ENCODE measurements at regions of chr12 and their contacts with region 1.

Region 1: DNA sequence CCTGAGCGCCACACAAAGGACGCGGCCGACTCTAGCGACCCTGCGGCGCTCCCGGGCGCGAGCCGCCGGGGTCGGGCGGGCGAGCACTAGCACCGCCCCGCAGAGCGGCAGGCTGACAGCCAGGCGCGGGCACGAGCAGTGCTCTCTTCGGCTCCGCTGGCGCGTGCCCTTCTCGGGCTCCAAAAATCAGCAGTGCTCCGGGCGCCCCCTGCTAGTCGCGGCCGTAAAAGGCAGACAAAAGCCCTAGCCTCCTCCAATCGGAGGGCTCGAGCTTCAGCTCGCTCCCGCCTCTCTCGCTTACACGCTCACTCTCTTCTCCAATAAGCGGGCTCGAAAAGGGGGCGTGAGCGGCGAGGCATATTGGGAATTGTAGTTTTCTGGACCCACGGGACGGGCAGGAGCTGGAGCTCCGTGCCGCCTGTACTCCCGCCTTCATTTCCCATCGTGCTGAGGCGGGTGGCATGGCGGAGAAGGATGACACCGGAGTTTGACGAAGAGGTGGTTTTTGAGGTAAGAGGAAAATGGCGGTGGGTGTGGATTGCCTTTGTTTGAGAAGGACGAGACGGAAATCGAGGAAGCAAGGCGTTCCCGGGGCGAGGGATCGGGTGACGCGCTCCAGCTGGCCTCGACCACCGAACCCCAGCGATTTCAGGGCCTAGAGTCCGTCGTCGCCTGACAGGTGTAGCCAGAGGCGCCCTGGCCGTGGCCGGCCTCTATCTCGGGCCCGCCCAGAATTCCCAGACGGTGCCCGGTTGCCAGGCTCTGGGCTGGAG is at the starts of genes FGD6 and VEZT:
- DNase-seq: peak; percentile 99
- H3K4me3 Mint-ChIP-seq: peak within 1 kb of the TSS; percentile 98
- H3K27ac Mint-ChIP-seq: peak within 1 kb of the TSS; percentile 97
- H3K4me1 Mint-ChIP-seq: peaks cover 30% of the 10 kb centered on the region
- H3K27me3 Mint-ChIP-seq: no peaks in the 10 kb centered on the region
- total RNA-seq, gene FGD6: 2.0 TPM
- total RNA-seq, gene VEZT: 41.3 to 42.5 TPM

Region 2: DNA sequence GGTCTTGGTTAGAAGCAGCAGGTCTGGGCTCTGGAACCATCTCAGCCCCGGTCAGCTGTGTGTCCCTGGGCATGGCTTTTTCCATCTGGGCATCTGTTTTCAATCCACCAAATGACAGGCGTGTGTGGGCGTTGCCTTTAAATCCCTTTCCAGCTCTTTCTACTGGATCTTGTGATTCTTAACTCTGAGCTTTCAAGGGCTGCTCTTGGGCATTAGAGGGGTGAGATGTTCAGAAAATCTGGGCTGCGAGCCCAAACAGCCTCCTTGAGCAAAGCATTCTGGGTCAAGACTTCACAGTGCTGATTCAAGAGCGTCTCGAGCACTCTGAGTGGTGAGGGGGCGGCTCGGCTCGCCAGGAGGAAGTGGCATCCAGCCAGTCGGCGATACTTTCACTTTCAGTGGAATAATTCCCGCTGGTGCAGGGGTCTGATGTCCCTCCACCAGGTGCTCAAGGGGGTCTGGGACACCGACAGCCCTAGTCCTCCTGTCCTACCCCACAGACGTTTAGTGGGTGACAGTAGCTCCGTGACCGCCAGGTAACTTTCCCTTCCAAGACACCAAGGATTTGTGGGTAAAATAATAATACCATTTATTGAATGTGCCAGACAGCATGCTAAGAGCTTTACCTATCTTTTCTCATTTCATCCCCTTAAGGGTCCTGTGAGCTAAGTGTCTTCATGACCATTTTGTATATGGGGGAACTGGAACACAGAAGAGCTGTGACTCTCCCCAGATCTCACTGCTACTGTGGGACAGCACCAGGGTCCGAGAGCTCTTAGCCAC is 955.1 kb before region 1 on chr12:
- CTCF ChIA-PET with region 1: no interaction called
- intact Hi-C with region 1: loop called (anchors 5 kb)
- DNase-seq: peak; percentile 83
- H3K4me3 Mint-ChIP-seq: peak overlapping the region; percentile 89
- H3K27ac Mint-ChIP-seq: peak overlapping the region; percentile 96
- H3K4me1 Mint-ChIP-seq: peaks cover 31% of the 10 kb centered on the region
- H3K27me3 Mint-ChIP-seq: no peaks in the 10 kb centered on the region

Region 3: GRCh38 chr12:95022477-95022876 is 195.1 kb before region 1 on chr12:
- CTCF ChIA-PET with region 1: no interaction called
- intact Hi-C with region 1: no loop called
- DNase-seq: no peak
- H3K4me3 Mint-ChIP-seq: no peak overlapping the region
- H3K27ac Mint-ChIP-seq: no peak overlapping the region
- H3K4me1 Mint-ChIP-seq: no peaks in the 10 kb centered on the region
- H3K27me3 Mint-ChIP-seq: no peaks in the 10 kb centered on the region

Region 4: DNA sequence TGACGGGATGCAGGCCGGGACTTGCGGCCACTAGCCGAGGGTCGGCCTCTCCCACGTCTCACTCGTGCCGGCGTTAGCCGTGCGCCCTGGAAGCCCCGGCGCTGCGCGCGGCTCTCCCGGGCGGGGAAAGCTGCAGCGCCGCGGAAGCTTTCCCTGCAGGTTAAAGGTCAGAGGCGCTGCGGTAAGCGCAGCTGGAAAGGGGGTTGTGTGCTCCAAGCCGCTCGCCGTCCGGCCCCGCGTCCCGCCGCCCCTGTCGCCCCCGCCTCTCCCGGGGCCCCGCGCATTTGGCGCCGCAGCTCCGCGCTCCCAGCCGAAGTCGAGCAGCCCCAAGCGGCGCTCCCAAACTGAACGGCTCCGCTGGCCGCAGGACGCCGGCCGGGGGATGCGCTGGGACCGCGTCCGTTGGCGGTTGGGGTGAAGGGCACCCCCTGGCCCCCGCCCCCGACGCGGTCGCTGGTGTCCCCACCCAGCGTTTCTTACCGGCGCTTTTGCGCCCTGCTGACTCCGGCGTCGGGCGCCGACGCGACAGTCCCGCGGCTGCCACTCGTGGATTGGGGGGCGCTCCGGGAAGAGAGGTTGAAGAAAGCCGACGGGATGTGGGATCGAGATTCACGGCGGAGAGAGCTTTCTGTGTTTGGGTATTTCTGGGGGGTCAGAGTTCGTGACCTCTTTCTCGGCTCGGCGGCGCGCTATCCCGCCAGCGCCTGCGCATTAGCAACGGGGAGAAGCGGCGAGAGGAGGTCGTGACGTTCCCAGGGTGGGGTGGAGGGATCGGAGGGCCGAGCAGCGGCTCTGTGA is 144.5 kb before region 1 on chr12 and contains the start of gene NR2C1:
- CTCF ChIA-PET with region 1: no interaction called
- intact Hi-C with region 1: loop called (anchors 1 kb)
- DNase-seq: peak; percentile 95
- H3K4me3 Mint-ChIP-seq: peak within 1 kb of the TSS; percentile 92
- H3K27ac Mint-ChIP-seq: peak within 1 kb of the TSS; percentile 63
- H3K4me1 Mint-ChIP-seq: peaks cover 19% of the 10 kb centered on the region
- H3K27me3 Mint-ChIP-seq: no peaks in the 10 kb centered on the region
- total RNA-seq, gene NR2C1: 19.8 to 24.6 TPM

Region 5: DNA sequence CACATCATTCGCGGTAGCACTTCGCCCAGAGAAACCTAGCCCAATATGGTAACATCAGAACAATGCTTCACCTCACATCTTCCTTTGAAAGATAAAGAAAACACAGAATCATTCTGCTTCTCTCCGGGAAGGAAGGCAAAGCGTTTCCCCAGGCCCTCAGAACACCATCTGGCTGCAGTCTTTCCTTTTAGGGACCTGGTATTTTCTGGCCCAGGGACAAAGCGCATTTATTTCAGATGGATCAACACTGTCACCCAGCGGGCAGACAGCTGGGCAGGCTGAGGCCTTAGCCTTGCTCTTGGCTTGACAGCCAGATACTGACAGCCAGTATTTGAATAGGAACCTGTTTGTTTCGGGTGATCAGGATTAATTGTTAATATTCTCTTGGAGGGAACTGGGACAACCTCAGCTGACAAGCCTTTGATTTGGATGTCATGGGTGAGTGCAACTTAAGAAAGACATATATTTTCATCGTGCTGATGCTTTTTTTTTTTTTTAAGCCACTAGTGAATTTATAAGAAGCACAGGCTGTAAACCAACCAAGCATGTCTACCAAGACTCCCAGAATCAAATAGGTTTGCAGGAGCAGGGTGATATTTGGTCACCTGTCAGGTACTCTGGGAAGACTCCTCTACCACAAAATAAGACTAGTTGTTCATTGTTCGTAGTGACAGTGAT is 119.0 kb after region 1 on chr12:
- CTCF ChIA-PET with region 1: interaction called, 6 read pairs
- intact Hi-C with region 1: loop called (anchors 1 kb)
- DNase-seq: no peak
- H3K4me3 Mint-ChIP-seq: no peak overlapping the region
- H3K27ac Mint-ChIP-seq: no peak overlapping the region
- H3K4me1 Mint-ChIP-seq: peaks cover 5% of the 10 kb centered on the region
- H3K27me3 Mint-ChIP-seq: no peaks in the 10 kb centered on the region

Region 6: GRCh38 chr12:95532851-95533250 is 315.3 kb after region 1 on chr12:
- CTCF ChIA-PET with region 1: interaction called, 3 read pairs
- intact Hi-C with region 1: loop called (anchors 5 kb)
- DNase-seq: no peak
- H3K4me3 Mint-ChIP-seq: no peak overlapping the region
- H3K27ac Mint-ChIP-seq: no peak overlapping the region
- H3K4me1 Mint-ChIP-seq: peaks cover 12% of the 10 kb centered on the region
- H3K27me3 Mint-ChIP-seq: no peaks in the 10 kb centered on the region

Region 7: DNA sequence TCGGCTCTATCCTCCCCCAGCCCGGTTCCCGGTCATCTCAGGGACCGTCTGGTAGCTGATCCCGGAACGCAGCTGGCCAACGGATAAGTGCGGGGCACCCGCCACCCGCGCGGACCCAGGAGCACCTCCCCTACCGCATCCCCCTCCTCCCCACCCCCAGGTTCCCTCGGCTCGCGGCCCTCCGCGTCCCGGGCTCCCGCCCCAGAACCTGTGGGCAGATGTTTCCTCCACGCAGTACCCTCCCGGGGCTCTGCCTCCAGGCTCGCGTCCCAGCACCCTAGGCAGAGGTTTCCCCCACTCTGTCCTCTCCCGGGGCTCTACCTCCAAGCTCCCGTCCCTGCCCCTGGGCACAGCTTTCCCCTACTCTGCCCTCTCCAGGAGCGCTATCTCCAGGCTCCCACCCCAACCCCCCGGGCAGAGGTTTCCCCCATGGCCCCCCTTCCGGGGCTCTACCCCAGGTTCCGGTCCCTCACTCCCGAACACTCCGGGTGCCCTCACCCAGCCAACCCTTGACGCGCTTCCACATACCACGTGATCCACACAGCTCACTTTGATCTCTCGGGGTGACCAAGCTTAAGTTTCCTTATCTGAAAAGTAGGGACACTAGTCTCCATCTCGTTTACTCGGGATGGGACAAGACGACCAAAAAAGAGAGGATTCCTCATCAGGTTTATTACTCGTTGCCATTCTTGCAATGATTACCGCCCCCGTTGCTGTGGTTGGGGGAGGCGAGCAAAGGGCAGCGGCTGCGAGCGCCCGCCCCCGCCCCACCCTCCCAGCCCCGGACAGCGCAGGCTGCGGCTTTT is 725.2 kb after region 1 on chr12 and contains the start of gene CCDC38:
- CTCF ChIA-PET with region 1: no interaction called
- intact Hi-C with region 1: loop called (anchors 5 kb)
- DNase-seq: peak; percentile 91
- H3K4me3 Mint-ChIP-seq: peak within 1 kb of the TSS; percentile 86
- H3K27ac Mint-ChIP-seq: peak within 1 kb of the TSS; percentile 80
- H3K4me1 Mint-ChIP-seq: peaks cover 4% of the 10 kb centered on the region
- H3K27me3 Mint-ChIP-seq: no peaks in the 10 kb centered on the region
- total RNA-seq, gene CCDC38: 0.49 TPM in 1 of 2 experiments, not detected in the other